Ascending aorta (tissue), 2 donors: ENCODE measurements at regions of chr16 and their contacts with region 1.

Region 1: GRCh38 chr16:10971560-10971961 is 27.2 kb downstream of the CLEC16A start:
- DNase-seq: peak in 1 of 2 donors; percentile 74
- H3K4me3 ChIP-seq: no peak overlapping the region
- H3K27ac ChIP-seq: peak overlapping the region; percentile 72 to 89
- H3K4me1 ChIP-seq: peaks cover 10 to 24% of the 10 kb centered on the region in 2 donors
- H3K27me3 ChIP-seq: no peaks in the 10 kb centered on the region
- CTCF ChIP-seq: peak; percentile 63 to 83 (median 71)

Region 2: GRCh38 chr16:11297492-11298142 is 326.1 kb after region 1 on chr16:
- intact Hi-C with region 1: loop called (anchors 2 kb)
- DNase-seq: peak; percentile 56 to 85
- H3K4me3 ChIP-seq: peak overlapping the region; percentile 42 to 45
- H3K27ac ChIP-seq: peak overlapping the region in 1 of 2 donors; percentile 26
- H3K4me1 ChIP-seq: peaks cover 0 to 11% of the 10 kb centered on the region in 2 donors
- H3K27me3 ChIP-seq: no peaks in the 10 kb centered on the region
- CTCF ChIP-seq: peak in 2 of 3 experiments; percentile 16 to 41